GM12878 (cell line): ENCODE measurements at regions of chr15 and their contacts with region 1.

Region 1: DNA sequence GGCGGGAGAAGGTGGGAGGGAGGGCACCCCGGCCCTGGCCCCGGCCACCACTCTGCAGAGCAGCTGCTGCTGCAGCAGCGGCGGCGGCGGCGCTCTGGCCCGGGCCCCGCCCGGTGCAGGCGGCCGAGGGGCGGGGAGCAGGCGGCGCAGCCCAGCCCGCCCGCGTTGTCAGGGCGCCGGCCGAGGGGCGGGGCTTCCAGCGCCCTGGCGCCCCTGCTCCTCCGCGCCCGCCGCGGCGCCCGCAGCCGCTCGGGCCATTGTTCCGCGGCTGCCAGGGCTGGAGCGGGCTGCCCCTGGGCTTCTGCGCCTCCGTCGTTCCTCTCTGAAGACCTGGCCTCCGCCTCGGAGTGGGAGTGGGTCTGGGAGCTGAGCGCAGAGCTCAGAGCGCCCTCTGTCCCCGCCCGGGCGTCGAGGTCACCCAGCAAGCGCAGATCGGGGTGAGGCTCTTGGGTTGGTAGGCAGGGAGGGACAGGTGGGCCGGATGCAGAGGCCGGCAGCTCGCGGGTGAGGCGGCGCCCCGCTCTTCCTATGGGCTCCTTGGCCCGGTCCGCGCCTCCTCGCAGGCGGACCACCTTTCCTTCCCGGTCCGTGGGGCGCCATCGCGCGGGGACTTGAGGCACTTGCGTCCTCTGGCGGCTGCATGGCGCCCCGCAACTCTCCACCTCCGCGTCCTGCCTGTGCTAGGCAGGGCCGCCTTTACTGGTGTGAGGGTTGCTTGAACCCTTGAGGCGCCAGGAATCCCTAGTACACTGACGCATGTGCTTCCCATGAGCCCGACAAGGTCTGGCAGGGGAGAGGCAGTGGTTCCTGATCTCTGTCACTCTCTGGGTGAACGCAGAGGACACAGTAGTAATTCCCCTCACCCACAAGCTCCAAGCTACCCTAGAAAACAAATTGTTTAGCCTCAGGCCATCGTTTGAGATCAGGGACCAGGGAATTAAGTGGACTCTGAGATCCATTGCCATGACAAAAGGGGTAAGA is at the start of gene LPCAT4:
- DNase-seq: peak; percentile 65
- ATAC-seq: peak; percentile 86
- H3K4me3 ChIP-seq: peak within 1 kb of the TSS; percentile 86
- H3K27ac ChIP-seq: peak within 1 kb of the TSS; percentile 96
- H3K4me1 ChIP-seq: peaks cover 34% of the 10 kb centered on the region
- H3K27me3 ChIP-seq: no peaks in the 10 kb centered on the region
- CTCF ChIP-seq: peak; percentile 89 to 96 (median 95); a peak in 5 of 6 replicates
- EP300 ChIP-seq: no peak
- POLR2A ChIP-seq: peak; percentile 76; the same call in 1 of the 2 replicates
- RAD21 ChIP-seq: peak; percentile 61
- polyA plus RNA-seq, gene LPCAT4: 14.4 to 17.2 TPM

Region 2: DNA sequence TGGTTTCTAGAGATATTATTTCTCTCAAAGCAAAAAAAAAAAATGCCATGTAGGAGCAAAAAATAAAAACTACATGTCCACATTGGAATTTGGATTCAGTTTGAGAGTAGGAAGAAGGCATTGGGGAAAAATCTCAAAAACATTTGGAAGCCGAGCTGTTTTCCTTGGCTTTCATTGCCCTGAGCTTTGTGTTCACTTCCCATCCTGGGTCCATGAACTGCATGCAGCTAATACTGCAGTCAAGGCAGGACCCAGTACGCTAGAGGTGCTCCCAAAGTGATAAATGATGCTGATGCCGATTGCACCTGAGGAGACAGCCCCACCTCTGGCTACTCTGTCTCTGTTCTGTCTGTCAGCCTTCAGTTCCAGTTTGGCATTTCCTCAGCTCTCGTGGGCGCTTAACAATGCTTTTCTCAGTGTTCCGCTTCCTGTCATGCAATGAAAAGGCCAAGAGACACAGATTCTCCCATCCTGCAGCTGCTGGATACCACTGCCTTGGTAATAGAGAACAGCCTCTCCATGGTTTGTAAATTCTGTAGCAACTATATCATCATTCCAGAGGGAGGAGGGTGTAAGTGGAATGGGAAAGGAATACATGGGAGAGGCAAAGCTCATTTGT is 874.8 kb before region 1 on chr15:
- CTCF ChIA-PET with region 1: no interaction called
- POLR2A ChIA-PET with region 1: no interaction called
- RAD21 ChIA-PET with region 1: no interaction called
- SMC1A ChIA-PET with region 1: no interaction called
- in situ Hi-C with region 1: no loop called
- intact Hi-C with region 1: no loop called
- DNase-seq: no peak
- ATAC-seq: no peak
- H3K4me3 ChIP-seq: no peak overlapping the region
- H3K27ac ChIP-seq: no peak overlapping the region
- H3K4me1 ChIP-seq: no peaks in the 10 kb centered on the region
- H3K27me3 ChIP-seq: no peaks in the 10 kb centered on the region; a peak in 1 of 4 replicates
- CTCF ChIP-seq: no peak
- EP300 ChIP-seq: no peak
- POLR2A ChIP-seq: no peak
- RAD21 ChIP-seq: no peak

Region 3: GRCh38 chr15:34109797-34110663 is 257.4 kb before region 1 on chr15:
- CTCF ChIA-PET with region 1: interaction called, 10 read pairs
- POLR2A ChIA-PET with region 1: no interaction called
- RAD21 ChIA-PET with region 1: interaction called, 12 read pairs
- SMC1A ChIA-PET with region 1: interaction called, 10 read pairs
- in situ Hi-C with region 1: no loop called
- intact Hi-C with region 1: no loop called
- DNase-seq: no peak
- ATAC-seq: peak; percentile 84
- H3K4me3 ChIP-seq: no peak overlapping the region
- H3K27ac ChIP-seq: no peak overlapping the region
- H3K4me1 ChIP-seq: no peaks in the 10 kb centered on the region
- H3K27me3 ChIP-seq: no peaks in the 10 kb centered on the region
- CTCF ChIP-seq: peak; percentile 65 to 73 (median 67)
- EP300 ChIP-seq: no peak
- POLR2A ChIP-seq: no peak
- RAD21 ChIP-seq: peak; percentile 90

Region 4: DNA sequence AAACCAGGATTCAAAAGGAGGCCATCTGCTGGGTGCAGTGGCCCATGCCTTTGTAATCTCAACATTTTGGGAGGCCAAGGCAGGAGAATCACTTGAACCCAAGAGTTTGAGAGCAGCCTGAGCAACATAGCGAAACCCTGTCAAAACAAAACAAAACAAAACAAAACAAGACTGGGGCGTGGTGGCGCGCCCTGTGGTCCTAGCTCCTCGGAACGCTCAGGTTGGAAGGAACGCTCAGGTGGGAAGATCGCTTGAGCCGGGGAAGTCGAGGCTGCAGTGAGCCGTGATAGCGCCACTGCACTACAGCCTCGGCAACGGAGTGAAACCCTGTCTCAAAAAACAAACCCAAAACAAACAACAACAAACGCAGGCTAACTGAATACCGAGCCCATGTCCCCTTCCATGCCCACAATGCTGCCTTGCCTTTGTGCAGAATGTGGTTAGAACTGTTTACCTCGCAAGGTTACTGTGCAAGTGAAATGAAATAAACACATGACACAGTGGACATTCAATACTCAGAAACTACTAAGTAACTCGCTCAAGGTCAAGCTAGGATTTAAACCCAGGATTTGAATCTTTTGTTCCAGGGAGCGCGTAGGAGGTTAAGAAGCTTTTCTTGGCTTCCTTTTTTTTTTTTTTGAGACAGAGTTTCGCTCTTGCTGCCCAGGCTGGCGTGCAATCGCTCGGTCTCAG is 143.3 kb before region 1 on chr15:
- CTCF ChIA-PET with region 1: interaction called, 10 read pairs
- POLR2A ChIA-PET with region 1: no interaction called
- RAD21 ChIA-PET with region 1: interaction called, 10 read pairs
- SMC1A ChIA-PET with region 1: no interaction called
- in situ Hi-C with region 1: no loop called
- intact Hi-C with region 1: no loop called
- DNase-seq: no peak
- ATAC-seq: peak; percentile 31
- H3K4me3 ChIP-seq: peak overlapping the region; percentile 84
- H3K27ac ChIP-seq: peak overlapping the region; percentile 93
- H3K4me1 ChIP-seq: peaks cover 6% of the 10 kb centered on the region; the same call in 1 of the 2 replicates
- H3K27me3 ChIP-seq: no peaks in the 10 kb centered on the region
- CTCF ChIP-seq: no peak
- EP300 ChIP-seq: no peak
- POLR2A ChIP-seq: no peak
- RAD21 ChIP-seq: no peak

Region 5: DNA sequence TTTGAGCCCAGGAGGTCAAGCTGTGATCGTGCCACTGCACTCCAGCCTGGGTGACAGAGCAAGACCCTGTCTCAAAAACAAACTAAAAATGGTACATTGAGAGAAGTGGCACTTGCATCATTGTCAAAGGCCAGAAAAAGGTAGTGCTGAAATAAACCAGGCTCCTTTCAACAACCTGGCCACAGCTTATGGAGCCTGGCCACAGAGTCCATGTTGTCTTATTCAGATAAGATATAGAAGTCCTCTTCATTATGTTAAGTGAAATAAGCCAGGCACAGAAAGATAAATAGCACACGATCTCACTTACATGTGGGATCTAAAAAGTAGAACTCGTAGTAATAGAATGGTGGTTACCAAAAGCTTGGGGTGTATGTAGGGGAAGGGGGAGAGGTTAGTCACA is 107.8 kb before region 1 on chr15:
- CTCF ChIA-PET with region 1: interaction called, 10 read pairs
- POLR2A ChIA-PET with region 1: no interaction called
- RAD21 ChIA-PET with region 1: interaction called, 3 read pairs
- SMC1A ChIA-PET with region 1: interaction called, 10 read pairs
- in situ Hi-C with region 1: no loop called
- intact Hi-C with region 1: no loop called
- DNase-seq: no peak
- ATAC-seq: no peak
- H3K4me3 ChIP-seq: no peak overlapping the region
- H3K27ac ChIP-seq: no peak overlapping the region
- H3K4me1 ChIP-seq: no peaks in the 10 kb centered on the region
- H3K27me3 ChIP-seq: no peaks in the 10 kb centered on the region
- CTCF ChIP-seq: no peak
- EP300 ChIP-seq: no peak
- POLR2A ChIP-seq: no peak
- RAD21 ChIP-seq: no peak

Region 6: GRCh38 chr15:34331809-34332208 is 35.6 kb before region 1 on chr15:
- CTCF ChIA-PET with region 1: interaction called, 22 read pairs
- POLR2A ChIA-PET with region 1: interaction called, 13 read pairs
- RAD21 ChIA-PET with region 1: interaction called, 32 read pairs
- SMC1A ChIA-PET with region 1: interaction called, 30 read pairs
- in situ Hi-C with region 1: no loop called
- intact Hi-C with region 1: loop called (anchors 5 kb)
- DNase-seq: no peak
- ATAC-seq: peak; percentile 13; the same call in 2 of the 3 replicates
- H3K4me3 ChIP-seq: peak overlapping the region; percentile 8
- H3K27ac ChIP-seq: peak overlapping the region; percentile 94
- H3K4me1 ChIP-seq: peaks cover 28% of the 10 kb centered on the region
- H3K27me3 ChIP-seq: no peaks in the 10 kb centered on the region
- CTCF ChIP-seq: no peak
- EP300 ChIP-seq: no peak
- POLR2A ChIP-seq: no peak
- RAD21 ChIP-seq: no peak

Region 7: DNA sequence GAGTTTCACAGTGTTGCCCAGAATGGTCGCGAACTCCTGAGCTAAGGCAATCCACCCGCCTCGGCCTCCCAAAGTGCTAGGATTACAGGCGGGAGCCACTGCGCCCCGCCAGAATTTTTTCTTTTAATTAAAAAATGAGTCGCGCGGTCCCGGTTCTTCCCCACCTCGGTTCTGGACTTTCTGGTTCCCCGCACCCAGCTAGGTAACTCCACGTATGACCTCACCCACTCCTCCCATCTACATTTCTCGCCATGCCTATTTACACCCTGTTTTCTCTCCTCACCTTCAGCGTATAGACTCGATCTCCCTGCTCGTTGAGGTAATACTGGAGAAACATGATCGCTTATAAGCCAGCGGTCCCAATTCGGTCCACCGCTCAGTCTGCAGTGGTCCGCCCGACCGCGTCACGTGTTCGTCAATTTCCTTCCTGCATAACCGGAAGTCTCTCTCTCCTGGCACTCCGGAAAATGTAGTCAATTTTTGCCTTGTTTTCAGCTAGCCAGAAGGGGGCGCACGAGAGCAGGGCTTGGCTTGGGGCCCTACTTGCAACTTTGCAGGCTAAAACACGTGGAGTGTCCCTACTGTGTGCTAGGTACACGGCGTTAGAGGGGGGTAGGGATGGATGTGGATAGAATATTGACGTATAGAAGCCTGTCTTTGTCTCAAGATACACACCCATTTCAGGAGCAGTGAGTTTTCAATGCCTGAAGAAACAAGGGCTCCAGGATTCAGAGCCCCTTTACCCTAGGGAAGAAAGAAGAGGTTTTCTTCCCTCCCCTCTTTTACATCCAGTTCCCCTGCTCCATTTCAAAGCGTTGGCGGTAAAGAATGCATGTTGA is 24.4 kb before region 1 on chr15 and contains the starts of genes NOP10 and NUTM1:
- CTCF ChIA-PET with region 1: interaction called, 35 read pairs
- POLR2A ChIA-PET with region 1: interaction called, 8 read pairs
- RAD21 ChIA-PET with region 1: interaction called, 37 read pairs
- SMC1A ChIA-PET with region 1: interaction called, 30 read pairs
- in situ Hi-C with region 1: no loop called
- intact Hi-C with region 1: loop called (anchors 1 kb)
- DNase-seq: peak; percentile 86
- ATAC-seq: peak; percentile 93
- H3K4me3 ChIP-seq: peak within 1 kb of the TSS; percentile 85
- H3K27ac ChIP-seq: peak within 1 kb of the TSS; percentile 75
- H3K4me1 ChIP-seq: peaks cover 8% of the 10 kb centered on the region; the same call in 1 of the 2 replicates
- H3K27me3 ChIP-seq: no peaks in the 10 kb centered on the region
- CTCF ChIP-seq: peak; percentile 96 to 99 (median 97)
- EP300 ChIP-seq: 0 out of 4 replicates have a peak, but pooled peaks have one; percentile 15 to 29
- POLR2A ChIP-seq: peak; percentile 87
- RAD21 ChIP-seq: peak; percentile 91
- polyA plus RNA-seq, gene NOP10: 1,758 to 1,778 TPM
- polyA plus RNA-seq, gene NUTM1: not detected

Region 8: GRCh38 chr15:35061825-35062737 is 694.7 kb after region 1 on chr15:
- CTCF ChIA-PET with region 1: no interaction called
- POLR2A ChIA-PET with region 1: no interaction called
- RAD21 ChIA-PET with region 1: no interaction called
- SMC1A ChIA-PET with region 1: no interaction called
- in situ Hi-C with region 1: no loop called
- intact Hi-C with region 1: no loop called
- DNase-seq: no peak
- ATAC-seq: peak; percentile 75
- H3K4me3 ChIP-seq: no peak overlapping the region
- H3K27ac ChIP-seq: no peak overlapping the region
- H3K4me1 ChIP-seq: peaks cover 8% of the 10 kb centered on the region; the same call in 1 of the 2 replicates
- H3K27me3 ChIP-seq: no peaks in the 10 kb centered on the region
- CTCF ChIP-seq: no peak
- EP300 ChIP-seq: no peak
- POLR2A ChIP-seq: no peak
- RAD21 ChIP-seq: no peak